ENCODE measurements at regions of chr3 and their contacts with region 1.

Region 1: DNA sequence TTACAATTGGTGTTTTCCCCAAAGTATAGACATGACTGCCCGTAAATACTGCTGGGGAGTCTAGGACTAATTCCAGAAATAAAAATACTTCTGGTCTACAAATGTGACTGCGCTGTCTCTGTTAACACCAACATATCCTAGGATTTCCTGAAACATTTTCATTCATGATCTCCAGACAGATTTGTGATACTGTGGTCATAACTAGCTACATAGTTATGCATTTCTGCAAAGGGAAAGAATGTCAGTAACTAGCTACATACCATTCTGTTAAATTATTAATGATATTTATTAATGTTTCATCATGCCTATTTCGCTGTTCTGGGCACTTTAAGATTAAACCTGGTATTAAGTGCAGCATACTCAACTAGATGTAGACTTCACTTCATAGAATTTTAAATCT is 33.3 kb downstream of the SETD5 start:
- DNase-seq: no peak
- H3K4me3 ChIP-seq: no peak overlapping the region
- H3K27ac ChIP-seq: no peak overlapping the region
- H3K4me1 ChIP-seq: no peaks in the 10 kb centered on the region
- H3K27me3 ChIP-seq: no peaks in the 10 kb centered on the region
- CTCF ChIP-seq: no peak

Region 2: GRCh38 chr3:9452417-9452816 is 21.7 kb after region 1 on chr3:
- CTCF ChIA-PET with region 1: no interaction called
- POLR2A ChIA-PET with region 1: no interaction called
- intact Hi-C with region 1: loop called (anchors 1 kb)
- DNase-seq: no peak
- H3K4me3 ChIP-seq: no peak overlapping the region
- H3K27ac ChIP-seq: 0 out of 2 replicates have a peak overlapping the region, but pooled peaks have one; percentile 18
- H3K4me1 ChIP-seq: no peaks in the 10 kb centered on the region
- H3K27me3 ChIP-seq: no peaks in the 10 kb centered on the region
- CTCF ChIP-seq: no peak

Region 3: GRCh38 chr3:9468460-9468859 is 37.7 kb after region 1 on chr3:
- CTCF ChIA-PET with region 1: no interaction called
- POLR2A ChIA-PET with region 1: no interaction called
- intact Hi-C with region 1: loop called (anchors 5 kb)
- DNase-seq: no peak
- H3K4me3 ChIP-seq: no peak overlapping the region
- H3K27ac ChIP-seq: no peak overlapping the region
- H3K4me1 ChIP-seq: no peaks in the 10 kb centered on the region
- H3K27me3 ChIP-seq: no peaks in the 10 kb centered on the region
- CTCF ChIP-seq: no peak

Region 4: DNA sequence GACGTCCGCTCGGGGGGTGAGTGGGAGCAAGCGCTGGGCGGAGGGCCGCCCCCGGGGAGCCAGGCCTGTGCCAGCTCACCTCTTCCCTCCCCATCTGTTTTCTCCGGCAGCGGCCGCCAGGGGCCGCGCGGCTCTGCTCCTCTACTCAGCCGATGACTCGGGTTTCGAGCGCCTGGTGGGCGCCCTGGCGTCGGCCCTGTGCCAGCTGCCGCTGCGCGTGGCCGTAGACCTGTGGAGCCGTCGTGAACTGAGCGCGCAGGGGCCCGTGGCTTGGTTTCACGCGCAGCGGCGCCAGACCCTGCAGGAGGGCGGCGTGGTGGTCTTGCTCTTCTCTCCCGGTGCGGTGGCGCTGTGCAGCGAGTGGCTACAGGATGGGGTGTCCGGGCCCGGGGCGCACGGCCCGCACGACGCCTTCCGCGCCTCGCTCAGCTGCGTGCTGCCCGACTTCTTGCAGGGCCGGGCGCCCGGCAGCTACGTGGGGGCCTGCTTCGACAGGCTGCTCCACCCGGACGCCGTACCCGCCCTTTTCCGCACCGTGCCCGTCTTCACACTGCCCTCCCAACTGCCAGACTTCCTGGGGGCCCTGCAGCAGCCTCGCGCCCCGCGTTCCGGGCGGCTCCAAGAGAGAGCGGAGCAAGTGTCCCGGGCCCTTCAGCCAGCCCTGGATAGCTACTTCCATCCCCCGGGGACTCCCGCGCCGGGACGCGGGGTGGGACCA is 502.3 kb after region 1 on chr3:
- CTCF ChIA-PET with region 1: no interaction called
- POLR2A ChIA-PET with region 1: no interaction called
- intact Hi-C with region 1: no loop called
- DNase-seq: peak; percentile 48 to 70
- H3K4me3 ChIP-seq: peak overlapping the region; percentile 72
- H3K27ac ChIP-seq: peak overlapping the region; percentile 89
- H3K4me1 ChIP-seq: peaks cover 23% of the 10 kb centered on the region
- H3K27me3 ChIP-seq: no peaks in the 10 kb centered on the region
- CTCF ChIP-seq: peak; percentile 79